Endothelial cell of umbilical vein (primary cell): ENCODE measurements at regions of chr2 and their contacts with region 1.

Region 1: DNA sequence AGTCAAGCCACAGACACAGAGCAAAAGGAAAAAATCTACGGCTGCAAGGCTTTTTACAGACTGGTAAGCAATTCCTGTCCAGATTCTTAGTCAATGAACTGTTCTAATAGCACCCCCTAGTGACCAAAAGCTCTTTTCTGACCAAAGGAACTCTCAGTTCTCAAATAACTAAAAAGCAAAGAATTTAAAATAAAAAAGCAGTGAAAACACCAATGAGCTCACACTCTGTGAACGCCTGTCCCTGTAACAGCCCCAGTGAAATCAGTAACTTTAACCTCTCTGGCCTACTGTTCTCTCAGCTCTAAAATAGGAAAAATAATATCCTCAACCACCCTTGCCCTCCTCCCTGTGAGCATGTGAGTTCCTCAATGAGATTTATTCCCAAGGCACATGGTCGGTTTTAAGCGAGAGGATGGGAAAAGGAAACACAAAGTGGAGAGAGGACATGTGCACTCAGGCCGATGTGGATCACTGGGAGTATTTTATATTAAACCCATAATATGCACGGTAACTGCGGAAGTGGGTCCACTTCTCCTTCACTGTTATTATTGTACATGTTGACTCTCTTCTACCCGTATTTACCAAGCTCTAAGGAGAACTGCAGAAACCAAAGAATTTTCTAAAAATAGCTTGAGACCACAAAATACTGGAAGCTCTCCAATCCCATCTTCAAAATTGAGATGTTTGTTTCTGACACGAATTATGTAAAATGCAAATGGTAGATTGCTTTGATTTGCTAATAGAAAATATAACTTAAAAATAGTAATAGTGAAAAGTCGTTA is 128.5 kb downstream of the STK39 start:
- DNase-seq: peak; percentile 77
- H3K4me3 ChIP-seq: no peak overlapping the region
- H3K27ac ChIP-seq: no peak overlapping the region
- H3K4me1 ChIP-seq: peaks cover 11% of the 10 kb centered on the region
- H3K27me3 ChIP-seq: peaks cover 0 to 4% of the 10 kb centered on the region in 2 experiments
- CTCF ChIP-seq: peak; percentile 47 to 51
- POLR2A ChIP-seq: no peak

Region 2: GRCh38 chr2:166539340-166540162 is 1579.4 kb before region 1 on chr2:
- CTCF ChIA-PET with region 1: interaction called, 158 read pairs
- POLR2A ChIA-PET with region 1: no interaction called
- dilution Hi-C with region 1: no loop called
- intact Hi-C with region 1: loop called (anchors 1 kb)
- DNase-seq: peak; percentile 71
- H3K4me3 ChIP-seq: no peak overlapping the region
- H3K27ac ChIP-seq: no peak overlapping the region
- H3K4me1 ChIP-seq: no peaks in the 10 kb centered on the region
- H3K27me3 ChIP-seq: peaks cover 4% of the 10 kb centered on the region in 2 experiments
- CTCF ChIP-seq: peak; percentile 60 to 61
- POLR2A ChIP-seq: no peak

Region 3: GRCh38 chr2:167134381-167135072 is 984.4 kb before region 1 on chr2:
- CTCF ChIA-PET with region 1: no interaction called
- POLR2A ChIA-PET with region 1: no interaction called
- dilution Hi-C with region 1: no loop called
- intact Hi-C with region 1: loop called (anchors 5 kb)
- DNase-seq: peak; percentile 54
- H3K4me3 ChIP-seq: no peak overlapping the region
- H3K27ac ChIP-seq: peak overlapping the region; percentile 38
- H3K4me1 ChIP-seq: peaks cover 14% of the 10 kb centered on the region
- H3K27me3 ChIP-seq: no peaks in the 10 kb centered on the region
- CTCF ChIP-seq: no peak
- POLR2A ChIP-seq: no peak

Region 4: DNA sequence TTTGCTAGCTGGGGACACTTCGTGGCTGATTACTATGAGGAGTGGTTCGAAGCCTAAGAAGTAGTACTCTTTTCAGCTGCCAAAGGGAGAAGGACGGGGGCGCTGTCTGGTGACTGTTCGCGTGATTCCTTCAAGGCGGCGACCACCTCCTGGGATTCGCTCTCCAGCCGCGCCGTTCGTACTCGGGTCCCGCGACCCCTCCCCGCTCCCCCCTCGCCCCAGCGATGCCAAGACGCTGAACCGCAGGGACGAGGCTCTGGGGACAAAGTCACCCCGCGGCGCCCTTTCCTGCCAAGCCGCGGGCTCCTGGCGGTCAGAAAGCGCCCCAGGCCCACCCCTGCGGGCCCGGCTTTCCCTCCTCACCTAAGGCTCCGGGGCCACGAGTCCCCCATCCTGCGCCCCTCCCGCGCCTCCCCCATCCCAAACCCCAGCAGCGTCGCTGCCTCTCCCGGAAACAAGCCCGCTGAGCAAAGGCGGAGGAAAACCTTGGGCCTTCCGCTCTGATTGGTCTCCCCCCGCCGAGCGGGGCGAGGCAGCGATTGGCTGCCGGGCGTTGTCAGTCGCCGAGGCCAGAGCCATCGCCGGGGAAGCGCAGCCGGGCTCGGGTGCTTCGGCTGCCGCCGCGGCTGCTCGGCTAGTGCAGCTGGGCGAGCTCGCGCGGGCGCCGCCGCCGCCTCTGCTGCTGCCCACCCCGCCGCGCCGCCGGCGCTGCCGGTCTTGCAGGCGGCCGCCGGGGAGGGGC is 826.3 kb before region 1 on chr2:
- CTCF ChIA-PET with region 1: interaction called, 15 read pairs
- POLR2A ChIA-PET with region 1: no interaction called
- dilution Hi-C with region 1: no loop called
- intact Hi-C with region 1: loop called (anchors 10 kb)
- DNase-seq: peak; percentile 87
- H3K4me3 ChIP-seq: peak within 1 kb of the TSS; percentile 50 to 82 (median 69)
- H3K27ac ChIP-seq: no peak within 1 kb of the TSS
- H3K4me1 ChIP-seq: peaks cover 19% of the 10 kb centered on the region
- H3K27me3 ChIP-seq: peaks cover 8 to 38% of the 10 kb centered on the region in 2 experiments
- CTCF ChIP-seq: peak in 1 of 2 donors; percentile 51
- POLR2A ChIP-seq: no peak

Region 5: GRCh38 chr2:167550448-167550847 is 568.5 kb before region 1 on chr2:
- CTCF ChIA-PET with region 1: interaction called, 12 read pairs
- POLR2A ChIA-PET with region 1: no interaction called
- dilution Hi-C with region 1: no loop called
- intact Hi-C with region 1: loop called (anchors 1 kb)
- DNase-seq: peak; percentile 35
- H3K4me3 ChIP-seq: no peak overlapping the region
- H3K27ac ChIP-seq: no peak overlapping the region
- H3K4me1 ChIP-seq: no peaks in the 10 kb centered on the region
- H3K27me3 ChIP-seq: no peaks in the 10 kb centered on the region
- CTCF ChIP-seq: peak; percentile 14 to 40
- POLR2A ChIP-seq: no peak

Region 6: GRCh38 chr2:168006498-168006897 is 112.4 kb before region 1 on chr2:
- CTCF ChIA-PET with region 1: interaction called, 10 read pairs
- POLR2A ChIA-PET with region 1: no interaction called
- dilution Hi-C with region 1: no loop called
- intact Hi-C with region 1: no loop called
- DNase-seq: no peak
- H3K4me3 ChIP-seq: no peak overlapping the region
- H3K27ac ChIP-seq: no peak overlapping the region
- H3K4me1 ChIP-seq: no peaks in the 10 kb centered on the region
- H3K27me3 ChIP-seq: no peaks in the 10 kb centered on the region
- CTCF ChIP-seq: no peak
- POLR2A ChIP-seq: no peak

Region 7: GRCh38 chr2:168130346-168130745 is 11.4 kb after region 1 on chr2:
- CTCF ChIA-PET with region 1: interaction called, 42 read pairs
- POLR2A ChIA-PET with region 1: no interaction called
- dilution Hi-C with region 1: no loop called
- intact Hi-C with region 1: no loop called
- DNase-seq: no peak
- H3K4me3 ChIP-seq: no peak overlapping the region
- H3K27ac ChIP-seq: no peak overlapping the region
- H3K4me1 ChIP-seq: peaks cover 4% of the 10 kb centered on the region
- H3K27me3 ChIP-seq: no peaks in the 10 kb centered on the region
- CTCF ChIP-seq: no peak
- POLR2A ChIP-seq: no peak

Region 8: GRCh38 chr2:168622559-168622958 is 503.6 kb after region 1 on chr2:
- CTCF ChIA-PET with region 1: no interaction called
- POLR2A ChIA-PET with region 1: no interaction called
- dilution Hi-C with region 1: no loop called
- intact Hi-C with region 1: no loop called
- DNase-seq: no peak
- H3K4me3 ChIP-seq: no peak overlapping the region
- H3K27ac ChIP-seq: no peak overlapping the region
- H3K4me1 ChIP-seq: no peaks in the 10 kb centered on the region
- H3K27me3 ChIP-seq: no peaks in the 10 kb centered on the region
- CTCF ChIP-seq: no peak
- POLR2A ChIP-seq: no peak